Activated T-helper 1 cell treated with anti-CD3 and anti-CD28 coated beads, Interleukin-12 subunit alpha, Interleukin-12 subunit beta, Interleukin-2, Interleukin-4 antibody, amounts not matched to agents 30 ng/mL and 10 ng/mL and 1 ng/mL, durations not matched to agents 14 hours and 24 hours and 36 hours (primary cell): ENCODE measurements at regions of chr7 and their contacts with region 1.

Region 1: DNA sequence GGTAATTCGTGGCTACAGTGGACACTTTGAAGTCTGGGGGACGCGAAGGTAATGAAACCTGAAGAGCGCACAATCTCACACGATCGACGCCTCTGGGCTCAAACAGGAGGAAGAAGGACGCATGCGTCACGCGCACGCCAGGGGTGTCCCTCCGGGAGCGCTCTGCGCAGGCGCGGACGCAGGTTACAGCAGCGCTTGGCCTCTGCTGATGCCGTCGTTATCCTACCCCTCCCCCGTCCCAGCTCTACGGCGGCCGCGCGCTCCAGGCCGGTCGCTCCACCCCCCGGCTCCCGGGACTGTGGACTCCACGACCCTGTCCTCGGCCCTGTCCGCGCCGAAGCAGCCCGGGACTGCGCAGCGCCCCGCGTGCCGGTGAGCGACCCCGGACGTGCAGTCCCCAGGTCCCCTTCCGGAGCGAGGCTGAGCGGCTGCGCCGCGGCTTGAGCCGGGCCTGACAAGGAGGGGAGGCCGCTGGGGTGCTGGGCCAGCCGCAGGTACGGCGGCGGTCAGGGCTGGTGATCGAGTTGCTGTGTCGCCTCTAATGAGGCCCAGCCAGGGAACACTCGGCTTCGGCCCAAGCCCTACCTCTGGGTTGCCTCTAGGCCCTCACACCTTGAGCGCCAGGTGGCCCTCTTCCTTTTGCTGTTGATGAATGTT is at the start of gene TMEM106B:
- DNase-seq: peak; percentile 96
- H3K4me3 Mint-ChIP-seq: peak within 1 kb of the TSS; percentile 98
- H3K27ac Mint-ChIP-seq: peak within 1 kb of the TSS; percentile 98
- H3K4me1 Mint-ChIP-seq: peaks cover 35% of the 10 kb centered on the region
- H3K27me3 Mint-ChIP-seq: peaks cover 17% of the 10 kb centered on the region
- total RNA-seq, gene TMEM106B: 23.4 and 25.1 TPM in 2 replicates

Region 2: DNA sequence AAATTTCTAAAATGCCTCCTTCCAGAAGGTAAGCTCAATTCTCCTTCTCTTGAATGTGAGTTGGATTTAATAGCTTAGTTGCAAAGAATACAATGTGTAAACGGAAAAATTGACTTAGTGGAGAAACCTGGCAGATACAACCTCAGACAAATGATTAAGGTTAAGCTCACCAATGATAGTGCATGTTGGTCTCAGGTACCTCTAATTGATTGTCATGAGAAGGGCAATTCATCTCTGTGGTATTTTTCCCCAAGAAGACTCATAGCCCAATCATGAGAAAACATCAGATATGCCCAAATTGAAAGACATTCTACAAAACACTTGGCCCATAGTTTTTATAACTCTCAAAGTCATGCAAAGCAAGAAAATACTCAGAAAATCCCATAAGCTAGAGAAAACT is 36.3 kb before region 1 on chr7:
- intact Hi-C with region 1: loop called (anchors 1 kb)
- DNase-seq: no peak
- H3K4me3 Mint-ChIP-seq: no peak overlapping the region
- H3K27ac Mint-ChIP-seq: no peak overlapping the region
- H3K4me1 Mint-ChIP-seq: peaks cover 19% of the 10 kb centered on the region
- H3K27me3 Mint-ChIP-seq: peaks cover 19% of the 10 kb centered on the region

Region 3: GRCh38 chr7:12222889-12223579 is 11.9 kb after region 1 on chr7:
- intact Hi-C with region 1: loop called (anchors 1 kb)
- DNase-seq: no peak
- H3K4me3 Mint-ChIP-seq: peak overlapping the region; percentile 57
- H3K27ac Mint-ChIP-seq: peak overlapping the region; percentile 53
- H3K4me1 Mint-ChIP-seq: peaks cover 41% of the 10 kb centered on the region
- H3K27me3 Mint-ChIP-seq: no peaks in the 10 kb centered on the region

Region 4: DNA sequence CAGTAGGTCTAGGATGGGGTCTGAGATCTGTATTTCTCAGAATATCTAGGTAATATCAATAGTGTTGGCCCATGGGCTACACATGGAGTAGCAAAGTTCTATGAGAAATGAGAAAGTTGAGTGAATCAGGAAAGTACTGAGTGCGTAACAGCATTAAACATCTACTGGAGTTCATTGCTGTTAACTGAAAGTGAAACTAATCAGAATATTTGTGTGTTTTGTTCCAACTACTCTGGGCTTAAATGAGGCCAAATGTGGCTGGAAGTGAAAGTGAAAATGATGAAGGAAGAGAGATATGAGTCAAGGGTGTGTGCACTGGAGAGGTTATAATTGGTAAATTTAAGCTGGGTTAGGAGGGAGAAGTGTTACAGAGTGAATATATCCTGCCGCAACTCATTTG is 46.4 kb after region 1 on chr7:
- intact Hi-C with region 1: loop called (anchors 1 kb)
- DNase-seq: peak; percentile 60
- H3K4me3 Mint-ChIP-seq: no peak overlapping the region
- H3K27ac Mint-ChIP-seq: no peak overlapping the region
- H3K4me1 Mint-ChIP-seq: peaks cover 7% of the 10 kb centered on the region
- H3K27me3 Mint-ChIP-seq: peaks cover 18% of the 10 kb centered on the region

Region 5: GRCh38 chr7:12291870-12292269 is 80.7 kb after region 1 on chr7:
- intact Hi-C with region 1: loop called (anchors 1 kb)
- DNase-seq: no peak
- H3K4me3 Mint-ChIP-seq: no peak overlapping the region
- H3K27ac Mint-ChIP-seq: no peak overlapping the region
- H3K4me1 Mint-ChIP-seq: no peaks in the 10 kb centered on the region
- H3K27me3 Mint-ChIP-seq: peaks cover 10% of the 10 kb centered on the region

Region 6: GRCh38 chr7:12322284-12322902 is 111.2 kb after region 1 on chr7:
- intact Hi-C with region 1: loop called (anchors 2 kb)
- DNase-seq: no peak
- H3K4me3 Mint-ChIP-seq: no peak overlapping the region
- H3K27ac Mint-ChIP-seq: no peak overlapping the region
- H3K4me1 Mint-ChIP-seq: no peaks in the 10 kb centered on the region
- H3K27me3 Mint-ChIP-seq: peaks cover 2% of the 10 kb centered on the region

Region 7: DNA sequence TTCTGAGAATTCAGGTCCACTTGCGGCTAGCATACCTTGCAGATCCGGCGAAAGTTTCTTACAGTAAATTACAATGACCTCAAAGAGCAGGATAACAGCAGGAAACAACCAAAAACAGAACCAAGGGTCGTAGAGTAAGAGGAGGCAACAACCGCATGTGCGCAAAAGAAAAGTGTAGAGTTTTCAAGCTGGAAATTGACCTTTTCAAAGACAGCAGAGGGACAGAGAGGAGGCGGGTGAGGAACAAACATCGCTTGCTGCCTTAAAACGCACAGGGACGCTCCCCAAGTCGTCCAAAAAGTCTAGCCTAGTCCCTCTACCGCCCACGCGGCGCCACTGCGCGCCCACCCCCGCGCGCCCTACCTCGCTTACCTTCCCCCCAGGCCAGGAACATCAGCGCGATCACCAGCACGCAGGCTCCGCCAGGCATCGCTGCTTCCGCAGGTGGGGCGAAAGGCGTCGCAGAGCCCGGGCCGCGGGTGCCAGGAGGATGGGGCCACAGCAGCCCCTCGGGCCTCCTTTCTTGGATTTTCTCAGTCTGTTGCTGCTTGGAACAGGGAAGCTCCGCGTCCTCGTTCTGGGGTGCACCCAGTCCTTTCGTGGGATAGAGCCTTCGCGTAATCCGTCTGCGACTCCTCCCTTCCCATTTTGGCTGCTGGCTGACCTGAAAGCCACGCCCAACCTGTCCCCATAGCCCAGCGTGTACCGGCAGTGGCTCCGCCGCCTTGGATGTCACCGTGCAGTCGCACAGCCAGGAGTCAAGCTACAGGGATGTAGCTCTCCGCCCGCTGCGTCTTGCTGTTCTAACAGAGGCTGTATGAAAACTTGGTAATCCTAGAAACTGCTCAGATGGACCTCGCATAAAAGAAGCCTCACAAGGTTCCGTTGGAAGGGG is 192.4 kb after region 1 on chr7 and contains the start of gene VWDE:
- intact Hi-C with region 1: loop called (anchors 2 kb)
- DNase-seq: peak; percentile 55
- H3K4me3 Mint-ChIP-seq: peak within 1 kb of the TSS; percentile 88
- H3K27ac Mint-ChIP-seq: peak within 1 kb of the TSS; percentile 69
- H3K4me1 Mint-ChIP-seq: peaks cover 27% of the 10 kb centered on the region
- H3K27me3 Mint-ChIP-seq: peaks cover 25% of the 10 kb centered on the region
- total RNA-seq, gene VWDE: 1.6 and 1.7 TPM in 2 replicates